ENCODE measurements at regions of chr2 and their contacts with region 1.

Region 1: GRCh38 chr2:28729698-28730097 is 21.9 kb upstream of the PPP1CB start:
- DNase-seq: no peak

Region 2: DNA sequence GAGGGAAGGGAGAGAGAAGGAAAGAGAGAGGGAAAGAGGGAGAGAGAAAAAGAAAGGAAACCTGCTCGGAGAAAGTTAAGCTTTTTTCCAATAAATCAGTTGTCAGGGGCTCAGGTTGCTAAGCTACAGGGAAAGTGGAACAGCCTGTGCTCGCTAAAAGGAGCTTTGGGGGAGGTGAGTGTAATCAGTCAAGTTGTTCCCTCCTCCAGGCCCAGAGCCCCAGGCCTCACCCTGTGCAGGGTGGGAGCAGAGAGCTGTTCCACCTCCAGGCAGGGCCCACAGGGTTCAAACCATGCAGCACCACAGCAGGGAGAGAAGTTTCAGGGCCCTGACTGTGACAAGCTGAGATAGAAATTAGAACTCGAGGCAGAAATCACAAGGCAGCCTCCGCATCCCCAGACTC is 34.5 kb before region 1 on chr2:
- intact Hi-C with region 1: loop called in 1 of 2 experiments (anchors 2 kb)
- DNase-seq: no peak